Aorta (tissue), 5 donors: ENCODE measurements at regions of chr2 and their contacts with region 1.

Region 1: GRCh38 chr2:62014102-62014501 is 108.6 kb downstream of the COMMD1 start:
- DNase-seq: peak; percentile 80
- ATAC-seq: peak; percentile 95
- H3K4me3 ChIP-seq: no peak overlapping the region
- H3K27ac ChIP-seq: peak overlapping the region in 1 of 2 donors; percentile 36
- H3K4me1 ChIP-seq: no peaks in the 10 kb centered on the region
- H3K27me3 ChIP-seq: no peaks in the 10 kb centered on the region

Region 2: GRCh38 chr2:61910603-61911002 is 103.5 kb before region 1 on chr2:
- intact Hi-C with region 1: no loop called
- DNase-seq: no peak
- ATAC-seq: no peak
- H3K4me3 ChIP-seq: no peak overlapping the region
- H3K27ac ChIP-seq: no peak overlapping the region
- H3K4me1 ChIP-seq: no peaks in the 10 kb centered on the region
- H3K27me3 ChIP-seq: no peaks in the 10 kb centered on the region

Region 3: DNA sequence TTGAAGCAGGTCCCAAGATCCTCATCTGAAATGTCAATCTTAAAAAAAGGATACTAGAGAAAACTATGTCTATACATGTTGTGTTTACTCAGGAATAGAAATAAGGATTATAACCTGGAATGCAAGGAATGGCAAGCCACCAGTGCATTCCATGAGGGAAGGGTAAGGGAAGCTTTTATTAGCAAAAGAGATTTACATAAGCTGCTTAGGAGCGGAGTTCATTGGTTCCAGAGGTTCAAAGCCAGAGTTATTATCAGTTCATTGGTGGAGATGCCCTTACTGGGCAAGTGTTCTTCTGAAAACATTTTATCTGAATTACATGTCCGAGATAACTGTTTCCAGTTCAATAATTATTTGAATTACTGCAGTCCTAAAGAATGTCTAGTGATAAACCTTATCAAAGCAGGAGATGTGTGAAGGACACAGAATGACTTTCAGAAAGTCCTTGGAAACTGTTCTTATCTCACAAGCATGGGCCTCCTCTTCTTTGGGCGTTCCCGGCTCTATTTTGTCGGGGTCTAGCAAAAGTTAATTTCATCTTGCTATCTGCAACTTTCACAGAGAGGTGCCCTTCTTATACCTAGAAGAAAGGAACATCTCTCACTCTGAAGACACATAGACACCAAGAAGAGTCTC is 85.2 kb before region 1 on chr2:
- intact Hi-C with region 1: loop called in 1 of 2 experiments (anchors 10 kb)
- DNase-seq: no peak
- ATAC-seq: no peak
- H3K4me3 ChIP-seq: no peak overlapping the region
- H3K27ac ChIP-seq: no peak overlapping the region
- H3K4me1 ChIP-seq: no peaks in the 10 kb centered on the region
- H3K27me3 ChIP-seq: no peaks in the 10 kb centered on the region

Region 4: GRCh38 chr2:62055724-62056336 is 41.7 kb after region 1 on chr2:
- intact Hi-C with region 1: no loop called
- DNase-seq: no peak
- ATAC-seq: no peak
- H3K4me3 ChIP-seq: no peak overlapping the region
- H3K27ac ChIP-seq: no peak overlapping the region
- H3K4me1 ChIP-seq: no peaks in the 10 kb centered on the region
- H3K27me3 ChIP-seq: no peaks in the 10 kb centered on the region

Region 5: DNA sequence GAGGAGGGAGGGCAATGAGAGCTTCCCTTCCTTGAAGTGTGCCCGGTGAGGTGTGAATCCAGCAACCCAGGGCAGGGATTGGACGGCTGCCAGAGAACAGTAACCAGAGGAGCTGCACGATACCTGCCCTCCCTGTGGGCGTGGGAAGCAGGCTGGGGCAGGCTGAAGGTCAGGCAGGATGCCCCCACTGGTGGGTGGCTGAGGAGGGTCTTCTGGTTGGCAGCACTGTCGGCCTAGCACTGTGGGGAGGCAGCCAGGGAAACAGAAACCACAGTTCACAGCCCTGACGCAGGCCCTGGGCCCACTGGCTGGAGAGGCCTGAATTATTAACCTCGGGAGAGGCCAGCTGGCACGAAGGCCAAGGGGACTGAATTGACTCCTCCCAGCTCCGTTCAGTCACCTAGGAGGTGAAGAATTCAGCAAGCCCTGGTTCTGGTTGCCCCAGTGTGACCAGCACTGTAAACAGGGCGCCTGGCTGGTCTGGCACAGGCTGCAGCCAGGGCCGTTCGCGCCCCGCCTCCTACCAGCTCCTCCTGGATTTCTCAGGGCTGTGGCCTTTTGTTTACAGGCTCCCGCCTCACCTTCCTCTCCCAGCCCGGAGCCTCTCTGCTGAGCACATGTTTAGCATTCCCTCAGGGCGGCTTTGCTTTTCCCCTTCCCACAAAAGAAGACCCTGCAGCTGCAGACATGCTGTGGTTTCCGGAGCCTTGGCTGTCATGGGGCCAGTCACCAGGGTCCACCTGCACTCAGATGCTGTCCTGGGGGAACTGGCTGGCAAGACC is 279.6 kb after region 1 on chr2:
- intact Hi-C with region 1: loop called in 1 of 2 experiments (anchors 10 kb)
- DNase-seq: peak in 1 of 2 donors; percentile 59
- ATAC-seq: peak; percentile 82
- H3K4me3 ChIP-seq: no peak overlapping the region
- H3K27ac ChIP-seq: no peak overlapping the region
- H3K4me1 ChIP-seq: no peaks in the 10 kb centered on the region
- H3K27me3 ChIP-seq: no peaks in the 10 kb centered on the region